ENCODE measurements at regions of chr9 and their contacts with region 1.

Region 1: GRCh38 chr9:35657546-35658136 is at the start of gene RMRP:
- DNase-seq: peak; percentile 91
- H3K4me3 ChIP-seq: peak within 1 kb of the TSS; percentile 70 to 82
- H3K27ac ChIP-seq: peak within 1 kb of the TSS; percentile 97 to 98
- H3K4me1 ChIP-seq: peaks cover 0 to 12% of the 10 kb centered on the region in 2 experiments; a peak in 1 of 4 replicates
- H3K27me3 ChIP-seq: no peaks in the 10 kb centered on the region
- CTCF ChIP-seq: 0 out of 2 replicates have a peak, but pooled peaks have one; percentile 27
- EP300 ChIP-seq: peak in 1 of 2 experiments; percentile 74; a peak in 2 of 4 replicates
- RAD21 ChIP-seq: no peak
- polyA plus RNA-seq, gene RMRP: 64.9 and 157 TPM in 2 replicates

Region 2: DNA sequence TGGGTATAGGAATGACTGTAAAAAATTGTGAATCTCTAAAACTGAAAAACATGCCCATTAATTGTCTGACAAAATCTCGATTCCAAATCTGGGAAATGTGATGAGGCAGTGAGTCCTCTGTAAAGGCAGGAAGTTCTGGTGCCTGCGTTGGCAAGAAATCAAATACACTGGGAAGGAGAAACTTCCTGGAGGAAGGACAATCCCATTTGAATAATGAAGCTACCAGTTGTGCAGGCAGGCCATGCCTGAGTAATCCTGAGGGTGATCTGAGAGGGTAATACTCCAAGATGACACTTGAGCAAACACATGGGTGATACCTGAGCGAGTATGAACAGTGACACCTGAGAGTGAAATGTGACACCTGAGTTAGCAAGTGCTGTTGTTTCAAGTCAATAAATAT is 1378.2 kb before region 1 on chr9:
- CTCF ChIA-PET with region 1: no interaction called
- POLR2A ChIA-PET with region 1: no interaction called
- DNase-seq: peak; percentile 39
- H3K4me3 ChIP-seq: no peak overlapping the region
- H3K27ac ChIP-seq: peak overlapping the region in 1 of 2 experiments; percentile 18; a peak in 2 of 4 replicates
- H3K4me1 ChIP-seq: peaks cover 0 to 8% of the 10 kb centered on the region in 2 experiments; a peak in 3 of 4 replicates
- H3K27me3 ChIP-seq: no peaks in the 10 kb centered on the region
- CTCF ChIP-seq: no peak
- EP300 ChIP-seq: no peak
- RAD21 ChIP-seq: no peak

Region 3: DNA sequence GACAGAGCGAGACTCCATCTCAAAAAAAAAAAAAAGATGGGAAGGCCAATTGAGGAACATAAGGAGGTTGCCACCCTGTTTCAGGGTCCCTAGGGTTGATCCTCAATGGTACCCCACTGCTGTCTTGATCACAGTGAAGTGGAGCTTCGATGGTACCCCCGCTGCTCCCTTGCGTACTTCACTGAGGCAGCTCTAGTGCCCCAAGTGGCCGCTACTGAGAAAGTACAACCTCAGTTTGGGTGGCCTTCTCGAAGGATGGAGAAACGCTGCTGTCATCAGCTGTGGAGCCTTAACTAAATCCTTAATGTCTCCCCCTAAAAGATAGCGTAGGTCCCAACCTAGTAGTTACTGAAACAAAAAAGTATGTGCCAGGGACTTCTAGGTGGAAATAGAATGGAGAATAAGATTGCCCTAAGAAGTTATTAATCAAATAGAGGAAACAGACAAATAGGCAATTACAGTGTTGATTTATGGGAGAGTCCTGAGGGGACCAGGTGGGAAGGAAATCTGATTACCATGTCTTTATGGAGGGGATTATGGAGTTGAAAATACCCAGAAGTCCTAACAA is 46.3 kb before region 1 on chr9:
- CTCF ChIA-PET with region 1: interaction called, 20 read pairs
- POLR2A ChIA-PET with region 1: no interaction called
- DNase-seq: peak; percentile 77
- H3K4me3 ChIP-seq: no peak overlapping the region
- H3K27ac ChIP-seq: no peak overlapping the region
- H3K4me1 ChIP-seq: peaks cover 7 to 10% of the 10 kb centered on the region in 2 experiments; a peak in 1 of 4 replicates
- H3K27me3 ChIP-seq: 0 out of 2 replicates have a peak, but pooled peaks cover under 1% of the 10 kb centered on the region
- CTCF ChIP-seq: peak; percentile 72
- EP300 ChIP-seq: no peak
- RAD21 ChIP-seq: 0 out of 2 replicates have a peak, but pooled peaks have one; percentile 17

Region 4: DNA sequence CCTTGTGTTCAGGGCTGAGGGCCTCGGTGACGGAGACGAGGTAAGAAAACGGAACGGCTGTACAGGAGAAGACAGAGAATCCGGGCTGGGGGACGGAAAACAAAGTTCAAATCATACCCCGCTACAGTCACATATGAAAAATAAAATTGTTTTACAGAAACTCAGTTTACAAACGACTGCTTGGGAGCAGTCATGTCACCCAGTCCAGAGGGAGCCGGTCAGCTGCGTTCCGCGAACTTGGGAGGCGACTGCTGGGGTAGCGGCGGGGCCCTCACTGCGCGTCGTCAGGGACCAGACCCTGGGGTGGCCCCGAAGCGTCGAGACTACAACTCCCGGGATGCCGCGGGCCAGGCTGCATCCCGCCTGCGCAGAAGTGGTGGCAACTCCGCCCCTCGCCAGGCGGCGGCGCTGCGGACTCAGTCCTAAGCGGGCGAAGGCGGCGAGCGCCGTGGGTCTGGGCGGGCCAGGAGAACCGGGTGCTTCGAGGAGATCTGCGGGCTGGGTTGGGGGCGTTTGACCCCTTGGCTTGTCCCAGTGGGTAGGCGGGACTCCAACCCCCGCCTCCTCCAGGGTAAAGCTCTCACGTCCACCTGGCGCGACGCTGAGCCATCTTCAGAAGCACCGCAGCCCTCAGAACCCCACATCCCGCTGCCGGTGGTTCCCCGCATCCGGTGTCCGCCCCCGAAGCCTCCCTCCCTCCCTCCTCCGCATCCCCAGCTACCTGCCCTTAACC is 10.9 kb before region 1 on chr9:
- CTCF ChIA-PET with region 1: interaction called, 86 read pairs
- POLR2A ChIA-PET with region 1: interaction called, 20 read pairs
- DNase-seq: peak; percentile 97
- H3K4me3 ChIP-seq: peak overlapping the region; percentile 61 to 67
- H3K27ac ChIP-seq: peak overlapping the region in 1 of 2 experiments; percentile 76; a peak in 1 of 4 replicates
- H3K4me1 ChIP-seq: peaks cover 6 to 7% of the 10 kb centered on the region in 2 experiments; a peak in 2 of 4 replicates
- H3K27me3 ChIP-seq: no peaks in the 10 kb centered on the region
- CTCF ChIP-seq: peak; percentile 74
- EP300 ChIP-seq: no peak
- RAD21 ChIP-seq: peak; percentile 76

Region 5: GRCh38 chr9:35690431-35691333 is 33.0 kb after region 1 on chr9:
- CTCF ChIA-PET with region 1: interaction called, 38 read pairs
- POLR2A ChIA-PET with region 1: interaction called, 3 read pairs
- DNase-seq: peak; percentile 90
- H3K4me3 ChIP-seq: peak overlapping the region; percentile 62 to 73
- H3K27ac ChIP-seq: peak overlapping the region; percentile 93 to 96
- H3K4me1 ChIP-seq: peaks cover 19 to 34% of the 10 kb centered on the region in 2 experiments; a peak in 3 of 4 replicates
- H3K27me3 ChIP-seq: no peaks in the 10 kb centered on the region
- CTCF ChIP-seq: no peak
- EP300 ChIP-seq: no peak; a peak in 1 of 4 replicates
- RAD21 ChIP-seq: no peak